ENCODE measurements at regions of chr10 and their contacts with region 1.

Region 1: GRCh38 chr10:100346765-100347567 is at the start of gene SCD:
- DNase-seq: peak; percentile 93
- H3K4me3 ChIP-seq: peak within 1 kb of the TSS; percentile 90 to 95
- H3K27ac ChIP-seq: peak within 1 kb of the TSS in 1 of 2 experiments; percentile 94; a peak in 2 of 4 replicates
- H3K4me1 ChIP-seq: peaks cover 0 to 51% of the 10 kb centered on the region in 2 experiments; a peak in 1 of 4 replicates
- H3K27me3 ChIP-seq: no peaks in the 10 kb centered on the region
- CTCF ChIP-seq: no peak
- EP300 ChIP-seq: 0 out of 4 replicates have a peak, but pooled peaks of 1 of the 2 experiments have one; percentile 10
- RAD21 ChIP-seq: no peak
- polyA plus RNA-seq, gene SCD: 19.7 and 26.4 TPM in 2 replicates

Region 2: DNA sequence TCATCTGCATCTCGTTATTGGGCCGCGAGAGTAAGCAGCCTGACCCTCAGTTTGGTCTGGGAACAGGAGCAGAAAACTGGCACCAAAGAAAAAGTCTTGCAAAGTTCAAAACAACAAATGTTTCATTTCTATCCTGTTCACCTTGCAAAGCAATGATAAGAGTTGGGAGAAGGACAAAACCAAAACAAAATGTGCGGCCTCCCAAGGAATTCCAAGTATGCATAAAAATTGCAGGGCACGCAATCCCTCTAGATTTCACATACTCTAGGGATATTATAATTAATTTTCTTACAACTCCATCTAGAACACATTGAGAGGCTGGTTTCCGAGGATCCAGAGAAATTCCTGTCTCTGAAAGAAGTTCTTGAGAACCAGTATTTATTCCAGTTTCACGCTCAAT is 137.7 kb before region 1 on chr10:
- CTCF ChIA-PET with region 1: no interaction called
- POLR2A ChIA-PET with region 1: no interaction called
- DNase-seq: no peak
- H3K4me3 ChIP-seq: no peak overlapping the region
- H3K27ac ChIP-seq: no peak overlapping the region
- H3K4me1 ChIP-seq: no peaks in the 10 kb centered on the region; a peak in 1 of 4 replicates
- H3K27me3 ChIP-seq: no peaks in the 10 kb centered on the region
- CTCF ChIP-seq: no peak
- EP300 ChIP-seq: no peak
- RAD21 ChIP-seq: no peak

Region 3: DNA sequence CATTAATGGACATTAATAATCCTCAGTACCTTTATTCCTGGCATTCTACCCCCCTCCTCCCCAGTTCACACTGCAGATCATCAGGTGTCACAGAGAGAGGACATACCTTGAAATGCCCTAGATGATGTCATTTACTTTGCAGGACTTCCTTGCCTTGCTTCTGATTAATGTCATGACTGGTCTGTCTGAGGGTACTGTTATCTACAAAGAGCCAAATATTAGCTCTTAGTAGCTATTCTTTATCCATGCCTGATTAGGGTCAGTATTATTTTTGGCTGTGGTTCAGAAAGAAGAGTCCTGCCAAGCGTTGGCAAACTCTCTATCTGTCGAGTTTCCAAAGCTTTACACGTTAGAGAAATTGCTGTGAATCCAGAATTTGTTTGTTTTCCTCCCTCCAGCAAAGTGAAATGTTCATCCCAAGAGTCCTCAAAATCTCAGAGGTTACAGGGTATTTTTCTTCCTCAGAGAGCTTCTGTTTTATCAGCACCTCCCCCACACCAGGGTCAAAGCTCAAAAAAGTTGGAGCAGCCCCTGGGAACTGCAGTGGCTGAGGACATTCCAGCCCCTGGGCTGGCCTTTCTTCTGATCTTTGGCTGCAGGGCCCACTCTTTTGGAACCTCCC is 12.7 kb after region 1 on chr10:
- CTCF ChIA-PET with region 1: interaction called, 11 read pairs
- POLR2A ChIA-PET with region 1: interaction called, 15 read pairs
- DNase-seq: peak; percentile 57
- H3K4me3 ChIP-seq: no peak overlapping the region; a peak in 1 of 4 replicates
- H3K27ac ChIP-seq: peak overlapping the region in 1 of 2 experiments; percentile 76; a peak in 2 of 4 replicates
- H3K4me1 ChIP-seq: peaks cover 15 to 56% of the 10 kb centered on the region in 2 experiments
- H3K27me3 ChIP-seq: no peaks in the 10 kb centered on the region
- CTCF ChIP-seq: no peak
- EP300 ChIP-seq: peak in 1 of 2 experiments; percentile 60; a peak in 2 of 4 replicates
- RAD21 ChIP-seq: peak; percentile 1; the same call in 1 of the 2 replicates

Region 4: DNA sequence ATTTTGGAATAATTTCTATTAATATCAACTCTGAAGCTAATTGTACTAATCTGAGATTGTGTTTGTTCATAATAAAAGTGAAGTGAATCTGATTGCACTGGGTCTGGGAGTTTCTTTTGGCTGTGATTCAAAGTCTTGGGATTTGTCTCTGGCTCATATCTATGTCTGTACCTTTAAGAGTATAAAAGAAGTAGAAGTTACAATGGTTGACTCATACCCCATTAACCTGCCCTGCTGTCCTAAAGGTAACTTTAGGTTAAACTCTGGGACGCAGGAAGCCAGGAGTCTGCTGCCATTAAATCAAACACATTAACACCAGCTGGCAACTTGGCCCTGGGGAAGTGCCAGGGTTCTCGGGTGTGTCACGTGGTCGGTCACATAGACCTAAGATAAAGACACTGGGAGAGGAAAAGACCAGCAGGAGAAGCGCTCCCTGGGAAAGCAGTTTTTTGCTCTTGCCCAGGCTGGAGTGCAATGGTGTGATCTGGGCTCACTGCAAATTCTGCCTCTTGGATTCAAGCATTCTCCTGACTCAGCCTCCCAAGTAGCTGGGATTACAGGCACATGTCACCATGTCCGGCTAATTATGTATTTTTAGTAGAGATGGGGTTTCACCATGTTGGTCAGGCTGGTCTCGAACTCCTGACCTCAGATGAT is 17.9 kb after region 1 on chr10:
- CTCF ChIA-PET with region 1: interaction called, 11 read pairs
- POLR2A ChIA-PET with region 1: interaction called, 17 read pairs
- DNase-seq: peak; percentile 58
- H3K4me3 ChIP-seq: no peak overlapping the region
- H3K27ac ChIP-seq: peak overlapping the region; percentile 19 to 38; a peak in 3 of 4 replicates
- H3K4me1 ChIP-seq: peaks cover 19 to 42% of the 10 kb centered on the region in 2 experiments; a peak in 3 of 4 replicates
- H3K27me3 ChIP-seq: no peaks in the 10 kb centered on the region
- CTCF ChIP-seq: no peak
- EP300 ChIP-seq: peak in 1 of 2 experiments; percentile 71; a peak in 2 of 4 replicates
- RAD21 ChIP-seq: no peak; the same call in 1 of the 2 replicates

Region 5: GRCh38 chr10:100373298-100374136 is 26.6 kb after region 1 on chr10:
- CTCF ChIA-PET with region 1: interaction called, 7 read pairs
- POLR2A ChIA-PET with region 1: interaction called, 53 read pairs
- DNase-seq: peak; percentile 92
- H3K4me3 ChIP-seq: peak overlapping the region; percentile 56 to 69
- H3K27ac ChIP-seq: peak overlapping the region; percentile 97 to 99
- H3K4me1 ChIP-seq: peaks cover 20 to 27% of the 10 kb centered on the region in 2 experiments
- H3K27me3 ChIP-seq: no peaks in the 10 kb centered on the region
- CTCF ChIP-seq: no peak
- EP300 ChIP-seq: peak; percentile 7 to 12; a peak in 1 of 4 replicates
- RAD21 ChIP-seq: peak; percentile 3

Region 6: DNA sequence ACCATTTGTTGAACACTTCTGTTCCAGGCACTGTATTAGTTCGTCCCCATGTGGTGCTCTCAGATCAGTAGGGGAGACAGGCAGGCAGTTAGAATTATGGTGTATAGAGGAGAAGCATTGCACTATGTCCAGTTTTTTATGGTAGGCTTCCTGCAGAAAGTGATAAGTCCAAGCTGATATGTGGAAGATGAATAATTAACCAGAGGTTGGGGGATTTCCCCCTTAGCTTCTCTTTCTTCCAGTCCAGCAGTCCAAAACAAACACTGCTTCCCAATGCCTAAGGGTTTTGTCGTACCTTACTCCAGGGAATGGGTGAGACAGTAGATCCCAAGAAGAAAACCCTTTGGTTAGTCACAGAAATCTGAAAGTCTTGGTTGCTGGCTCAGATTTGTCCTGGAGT is 207.9 kb after region 1 on chr10:
- CTCF ChIA-PET with region 1: no interaction called
- POLR2A ChIA-PET with region 1: no interaction called
- DNase-seq: no peak
- H3K4me3 ChIP-seq: no peak overlapping the region
- H3K27ac ChIP-seq: no peak overlapping the region
- H3K4me1 ChIP-seq: peaks cover 0 to 8% of the 10 kb centered on the region in 2 experiments; a peak in 1 of 4 replicates
- H3K27me3 ChIP-seq: no peaks in the 10 kb centered on the region
- CTCF ChIP-seq: no peak
- EP300 ChIP-seq: no peak
- RAD21 ChIP-seq: no peak